Cardiac septum (tissue), 1 donor: ENCODE measurements at regions of chr7 and their contacts with region 1.

Region 1: GRCh38 chr7:45160417-45160881 is 2.9 kb downstream of the RAMP3 start:
- DNase-seq: peak; percentile 72

Region 2: DNA sequence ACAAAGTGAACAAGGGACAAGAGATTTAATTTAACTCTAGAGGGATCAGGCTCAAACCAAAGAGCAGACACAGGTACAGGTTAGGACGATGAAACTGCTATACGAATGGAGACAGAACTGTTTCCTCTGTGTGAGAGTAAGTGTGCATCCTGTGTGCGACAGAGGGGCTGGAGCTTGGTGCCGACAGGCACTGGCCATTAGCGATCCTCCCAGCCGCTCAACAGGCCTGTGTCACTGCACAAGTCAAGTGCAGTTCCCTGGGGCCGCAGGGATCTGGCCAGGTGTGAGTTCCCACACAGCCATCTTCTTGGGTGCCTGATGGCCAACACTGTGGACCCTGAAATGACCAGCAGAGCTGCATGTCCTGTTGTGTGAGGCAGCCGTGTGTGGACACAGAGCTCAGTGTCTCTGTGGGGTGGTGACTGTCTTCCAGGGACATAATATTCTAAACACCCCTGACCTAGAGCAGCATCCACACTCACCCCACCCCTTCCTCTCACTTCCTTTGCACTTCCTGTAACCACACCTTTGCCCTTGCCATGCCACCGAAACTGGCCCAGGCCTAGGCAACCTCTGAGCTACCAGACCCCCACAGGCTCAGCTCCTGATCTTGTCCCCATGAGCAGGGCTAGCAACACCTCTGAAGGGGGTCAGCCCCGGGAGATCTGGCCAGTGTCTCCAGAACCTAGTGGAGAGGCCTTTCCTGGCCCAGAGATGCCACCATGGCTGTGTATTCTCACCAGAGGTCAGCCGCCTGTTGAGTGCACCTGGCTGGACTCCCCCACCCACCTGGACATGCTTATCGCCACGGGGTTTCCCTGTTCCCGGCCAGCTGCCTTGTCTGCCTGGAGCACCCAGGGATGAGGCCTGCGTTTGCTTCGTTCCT is 37.2 kb before region 1 on chr7:
- intact Hi-C with region 1: no loop called
- DNase-seq: no peak

Region 3: DNA sequence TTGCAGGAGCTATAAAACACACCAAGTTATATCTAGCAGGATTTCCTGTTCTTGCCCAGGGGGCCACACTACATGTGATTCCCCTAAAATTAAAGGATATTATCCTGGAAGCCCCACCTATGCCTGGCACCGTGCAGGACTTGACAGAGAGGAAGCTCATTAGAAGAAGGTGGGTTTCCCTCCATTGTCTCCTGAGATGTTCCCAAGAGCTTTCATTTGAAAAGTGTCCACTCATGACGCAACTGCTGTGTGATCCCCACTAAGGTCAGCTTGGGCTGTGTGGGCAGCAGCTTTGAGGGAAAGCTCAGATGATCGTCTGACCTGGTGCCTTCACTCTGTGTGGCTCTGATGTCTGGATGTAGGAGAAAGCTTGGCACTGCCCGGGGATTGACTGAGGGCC is 50.6 kb after region 1 on chr7:
- intact Hi-C with region 1: loop called (anchors 1 kb)
- DNase-seq: no peak

Region 4: DNA sequence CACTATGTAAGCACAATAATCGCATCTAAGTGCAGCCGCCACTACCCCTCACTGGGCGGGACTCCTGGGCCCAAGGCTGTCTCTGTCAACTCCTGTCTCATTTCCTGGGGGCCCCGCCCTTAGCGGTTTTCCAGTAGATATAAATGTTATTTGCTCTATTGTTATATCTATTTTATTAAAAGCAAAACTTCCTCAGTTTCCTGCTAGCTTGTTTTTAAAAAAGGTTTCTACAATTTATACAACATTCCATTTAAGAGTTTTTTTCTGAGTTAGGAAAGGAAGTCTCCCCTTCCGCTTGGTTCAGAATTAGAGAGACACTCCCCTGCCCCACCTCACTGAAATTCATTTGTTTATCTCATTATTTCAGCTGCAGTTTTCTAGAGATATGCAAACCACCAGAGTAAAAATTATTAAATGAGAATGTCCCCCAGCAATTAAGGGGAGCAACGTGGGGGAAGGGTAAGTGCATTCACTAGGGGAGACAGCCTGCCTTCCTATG is 79.9 kb after region 1 on chr7:
- intact Hi-C with region 1: loop called (anchors 5 kb)
- DNase-seq: no peak